ENCODE measurements at regions of chr1 and their contacts with region 1.

Region 1: DNA sequence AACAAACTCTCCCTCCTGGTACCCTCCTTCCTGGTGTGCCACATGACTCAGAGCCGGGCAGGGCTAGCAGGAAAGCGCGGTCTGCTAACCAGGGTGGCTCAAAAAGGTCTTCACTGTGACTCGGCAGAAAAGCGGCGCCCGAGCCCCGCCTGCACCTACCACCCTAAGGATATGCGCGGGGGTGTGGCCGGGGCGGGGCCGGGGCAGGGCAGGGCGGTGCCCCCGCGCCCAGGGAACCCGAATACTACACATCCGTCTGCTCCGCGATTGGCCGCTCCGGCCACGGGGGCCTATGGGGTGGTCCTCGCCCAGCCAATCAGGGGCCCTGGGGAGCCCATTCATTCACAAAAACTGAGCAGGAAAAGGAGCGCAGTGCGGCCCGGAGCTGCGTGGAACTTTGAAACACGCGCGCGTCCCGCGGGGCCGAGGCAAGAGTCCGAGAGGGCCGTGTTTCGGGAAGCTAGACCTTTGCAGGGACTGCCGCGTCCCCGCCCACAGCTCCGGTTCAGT is 1.7 kb downstream of the LRP8 start:
- DNase-seq: peak; percentile 70 to 96 (median 79)
- ATAC-seq: peak; percentile 93
- H3K4me3 ChIP-seq: peak overlapping the region; percentile 88
- H3K4me3 Mint-ChIP-seq: peak overlapping the region; percentile 89 to 98 (median 94)
- H3K27ac ChIP-seq: peak overlapping the region; percentile 56
- H3K27ac Mint-ChIP-seq: peak overlapping the region; percentile 15 to 96 (median 73)
- H3K4me1 ChIP-seq: peaks cover 5 to 14% of the 10 kb centered on the region in 2 donors
- H3K4me1 Mint-ChIP-seq: peaks cover 6 to 52% (median 12%) of the 10 kb centered on the region in 7 donors
- H3K27me3 ChIP-seq: no peaks in the 10 kb centered on the region
- H3K27me3 Mint-ChIP-seq: no peaks in the 10 kb centered on the region

Region 2: GRCh38 chr1:53196485-53197270 is 129.5 kb before region 1 on chr1 and contains the start of gene CPT2:
- CTCF ChIA-PET with region 1: no interaction called
- POLR2A ChIA-PET with region 1: no interaction called
- intact Hi-C with region 1: loop called (anchors 1 kb)
- DNase-seq: peak; percentile 78 to 94 (median 89)
- ATAC-seq: peak; percentile 99
- H3K4me3 ChIP-seq: peak within 1 kb of the TSS; percentile 91
- H3K4me3 Mint-ChIP-seq: peak within 1 kb of the TSS; percentile 88 to 100 (median 98)
- H3K27ac ChIP-seq: peak within 1 kb of the TSS; percentile 98
- H3K27ac Mint-ChIP-seq: peak within 1 kb of the TSS; percentile 90 to 100 (median 97)
- H3K4me1 ChIP-seq: peaks cover 16 to 20% of the 10 kb centered on the region in 2 donors
- H3K4me1 Mint-ChIP-seq: peaks cover 13 to 48% (median 44%) of the 10 kb centered on the region in 7 donors
- H3K27me3 ChIP-seq: no peaks in the 10 kb centered on the region
- H3K27me3 Mint-ChIP-seq: no peaks in the 10 kb centered on the region
- total RNA-seq, gene CPT2: 8.8 to 23.0 (median 13.4) TPM

Region 3: GRCh38 chr1:53238197-53239155 is 87.7 kb before region 1 on chr1 and contains the start of gene MAGOH:
- CTCF ChIA-PET with region 1: no interaction called
- POLR2A ChIA-PET with region 1: no interaction called
- intact Hi-C with region 1: loop called in 1 of 2 experiments (anchors 1 kb)
- DNase-seq: peak; percentile 90 to 96 (median 95)
- ATAC-seq: peak; percentile 98
- H3K4me3 ChIP-seq: peak within 1 kb of the TSS; percentile 97
- H3K4me3 Mint-ChIP-seq: peak within 1 kb of the TSS; percentile 96 to 99 (median 98)
- H3K27ac ChIP-seq: peak within 1 kb of the TSS; percentile 94
- H3K27ac Mint-ChIP-seq: peak within 1 kb of the TSS; percentile 92 to 99 (median 98)
- H3K4me1 ChIP-seq: peaks cover 18 to 19% of the 10 kb centered on the region in 2 donors
- H3K4me1 Mint-ChIP-seq: peaks cover 18 to 47% (median 32%) of the 10 kb centered on the region in 7 donors
- H3K27me3 ChIP-seq: no peaks in the 10 kb centered on the region
- H3K27me3 Mint-ChIP-seq: peaks cover 0 to 2% (median 0%) of the 10 kb centered on the region in 5 donors
- total RNA-seq, gene MAGOH: 37.7 to 76.7 (median 52.3) TPM

Region 4: GRCh38 chr1:53294567-53294966 is 31.6 kb before region 1 on chr1:
- CTCF ChIA-PET with region 1: no interaction called
- POLR2A ChIA-PET with region 1: no interaction called
- intact Hi-C with region 1: loop called (anchors 2 to 5 kb)
- DNase-seq: peak in 1 of 9 donors; percentile 61
- ATAC-seq: peak; percentile 47
- H3K4me3 ChIP-seq: no peak overlapping the region
- H3K4me3 Mint-ChIP-seq: peak overlapping the region in 1 of 10 donors; percentile 68
- H3K27ac ChIP-seq: no peak overlapping the region
- H3K27ac Mint-ChIP-seq: peak overlapping the region in 2 of 9 donors; percentile 45 to 89
- H3K4me1 ChIP-seq: peaks cover 4 to 27% of the 10 kb centered on the region in 2 donors
- H3K4me1 Mint-ChIP-seq: peaks cover 8 to 55% (median 21%) of the 10 kb centered on the region in 7 donors
- H3K27me3 ChIP-seq: no peaks in the 10 kb centered on the region
- H3K27me3 Mint-ChIP-seq: no peaks in the 10 kb centered on the region

Region 5: DNA sequence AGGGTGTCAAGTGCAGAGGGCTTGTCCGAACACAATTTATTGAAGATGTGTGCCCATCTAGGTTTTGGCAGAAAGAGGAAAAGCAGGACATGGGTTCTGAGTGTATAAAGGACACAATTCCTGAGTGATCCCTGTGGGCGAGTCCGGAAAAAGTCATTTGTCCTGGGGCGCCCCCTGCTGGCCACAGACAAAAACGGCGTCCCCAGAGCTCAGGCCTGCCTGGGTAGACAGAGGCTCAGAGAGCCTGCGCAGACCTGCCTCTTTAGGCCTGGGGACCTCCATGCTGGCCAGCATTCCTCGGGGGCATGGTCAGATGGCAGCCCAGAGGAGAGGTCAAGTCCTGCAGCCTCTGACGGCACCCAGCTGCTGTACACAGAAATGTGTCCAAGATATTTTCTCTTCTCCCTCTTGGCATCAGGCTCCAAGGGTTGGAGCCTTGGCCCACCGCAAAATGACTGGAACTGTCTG is 67.2 kb after region 1 on chr1:
- CTCF ChIA-PET with region 1: no interaction called
- POLR2A ChIA-PET with region 1: interaction called, 3 read pairs
- intact Hi-C with region 1: loop called (anchors 1 to 2 kb)
- DNase-seq: peak; percentile 28 to 80 (median 62)
- ATAC-seq: peak; percentile 81
- H3K4me3 ChIP-seq: no peak overlapping the region
- H3K4me3 Mint-ChIP-seq: no peak overlapping the region
- H3K27ac ChIP-seq: no peak overlapping the region
- H3K27ac Mint-ChIP-seq: peak overlapping the region in 1 of 9 donors; percentile 45
- H3K4me1 ChIP-seq: no peaks in the 10 kb centered on the region
- H3K4me1 Mint-ChIP-seq: peaks cover 0 to 10% (median 0%) of the 10 kb centered on the region in 7 donors
- H3K27me3 ChIP-seq: no peaks in the 10 kb centered on the region
- H3K27me3 Mint-ChIP-seq: peaks cover 0 to 10% (median 0%) of the 10 kb centered on the region in 5 donors

Region 6: DNA sequence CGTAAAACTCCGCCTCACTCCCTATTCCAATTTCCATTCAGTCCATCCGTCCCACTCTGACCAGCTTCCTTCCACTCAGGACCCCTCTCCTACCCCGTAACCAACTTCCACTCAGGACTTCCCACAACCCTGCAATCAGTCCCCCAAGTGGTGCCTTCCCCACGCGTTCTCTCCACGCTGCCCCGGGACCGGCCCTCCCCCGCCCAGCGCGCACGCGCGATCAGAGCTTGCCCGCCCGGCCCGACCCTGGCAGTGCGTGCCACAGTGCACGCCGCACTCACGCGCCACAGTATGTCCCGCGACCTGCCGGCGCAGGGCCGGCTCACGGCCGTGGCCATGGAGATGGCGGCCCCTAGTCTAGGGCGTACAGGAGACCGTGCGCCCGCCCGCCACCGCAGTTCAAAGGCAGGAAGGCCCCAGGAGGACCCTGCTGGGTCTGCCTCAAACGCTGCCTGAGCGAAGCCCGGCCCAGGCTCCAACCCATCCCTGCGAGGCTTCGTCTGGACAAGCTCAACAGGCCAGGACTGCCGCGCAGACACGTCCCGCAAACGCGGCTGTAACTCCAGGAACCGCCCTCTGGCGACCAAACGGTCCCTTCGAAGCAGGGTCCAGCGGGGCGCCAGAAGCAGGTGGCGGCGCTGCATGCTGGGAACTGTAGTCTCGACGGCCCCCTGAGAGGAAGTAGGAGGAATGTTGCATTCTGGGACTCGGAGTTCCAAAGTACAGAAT is 511.9 kb after region 1 on chr1 and contains the start of gene NDC1:
- CTCF ChIA-PET with region 1: no interaction called
- POLR2A ChIA-PET with region 1: no interaction called
- intact Hi-C with region 1: loop called (anchors 1 to 10 kb)
- DNase-seq: peak; percentile 84 to 95 (median 92)
- ATAC-seq: peak; percentile 95
- H3K4me3 ChIP-seq: peak within 1 kb of the TSS; percentile 92
- H3K4me3 Mint-ChIP-seq: peak within 1 kb of the TSS; percentile 96 to 100 (median 99)
- H3K27ac ChIP-seq: peak within 1 kb of the TSS; percentile 95
- H3K27ac Mint-ChIP-seq: peak within 1 kb of the TSS; percentile 96 to 99 (median 98)
- H3K4me1 ChIP-seq: no peaks in the 10 kb centered on the region
- H3K4me1 Mint-ChIP-seq: peaks cover 10 to 41% (median 30%) of the 10 kb centered on the region in 7 donors
- H3K27me3 ChIP-seq: no peaks in the 10 kb centered on the region
- H3K27me3 Mint-ChIP-seq: no peaks in the 10 kb centered on the region
- total RNA-seq, gene NDC1: 6.9 to 20.2 (median 13.2) TPM